Naive thymus-derived CD8-positive, alpha-beta T cell (primary cell): ENCODE measurements at regions of chr2 and their contacts with region 1.

Region 1: GRCh38 chr2:25314514-25315315 is 27.0 kb downstream of the DNMT3A start:
- DNase-seq: peak in 9 of 10 donors; percentile 39 to 78 (median 63)
- ATAC-seq: peak; percentile 83 to 88
- H3K4me3 Mint-ChIP-seq: peak overlapping the region; percentile 45 to 85 (median 79)
- H3K27ac Mint-ChIP-seq: peak overlapping the region; percentile 87 to 96 (median 93)
- H3K4me1 Mint-ChIP-seq: peaks cover 32 to 83% (median 72%) of the 10 kb centered on the region in 4 donors
- H3K27me3 Mint-ChIP-seq: no peaks in the 10 kb centered on the region

Region 2: DNA sequence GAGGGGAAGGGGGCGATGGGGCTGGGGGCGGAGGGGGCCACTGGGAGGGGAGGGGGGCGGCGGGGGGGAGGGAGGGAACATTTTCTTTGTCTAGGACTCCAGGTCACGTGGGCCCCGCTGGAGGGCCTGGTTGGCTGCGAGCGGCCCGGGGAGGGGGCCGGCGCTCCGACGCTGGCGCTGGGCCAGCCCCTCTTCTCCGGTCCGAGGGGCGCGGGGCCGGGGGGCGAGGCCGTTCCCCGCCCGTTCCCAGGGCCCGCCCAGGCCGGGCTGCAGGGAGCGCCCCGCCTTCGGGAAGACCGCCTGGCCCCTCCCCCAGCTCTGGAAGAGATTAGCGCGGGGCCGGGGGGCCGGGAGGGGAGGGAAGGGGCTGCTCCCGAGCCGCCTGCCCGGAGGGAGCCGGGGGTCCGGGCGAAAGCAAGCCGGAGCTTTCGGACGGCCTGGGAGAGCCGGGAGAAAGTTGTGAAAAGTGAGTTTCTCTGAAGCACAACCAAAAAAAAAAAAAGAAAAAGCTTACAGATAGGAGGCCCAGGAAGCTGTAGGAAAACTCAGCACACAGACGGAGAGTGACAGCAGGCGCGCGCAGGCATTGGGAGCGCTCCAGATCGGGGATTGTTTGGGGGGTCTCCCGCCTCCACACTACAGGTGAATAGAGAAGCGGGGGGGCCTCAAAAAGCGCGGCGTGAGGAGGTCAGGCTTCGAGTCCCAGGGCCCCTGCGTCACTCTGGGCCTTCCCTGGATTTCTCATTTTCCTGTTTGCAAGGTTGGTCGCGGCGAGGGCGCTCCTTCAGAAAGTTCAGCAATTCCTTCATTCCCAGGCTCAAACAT is 62.2 kb before region 1 on chr2:
- POLR2A ChIA-PET with region 1: interaction called, 24 read pairs
- DNase-seq: peak; percentile 35 to 72 (median 49)
- ATAC-seq: peak; percentile 46 to 56
- H3K4me3 Mint-ChIP-seq: peak overlapping the region; percentile 83 to 95 (median 91)
- H3K27ac Mint-ChIP-seq: peak overlapping the region; percentile 85 to 96 (median 91)
- H3K4me1 Mint-ChIP-seq: peaks cover 42 to 62% (median 53%) of the 10 kb centered on the region in 4 donors
- H3K27me3 Mint-ChIP-seq: no peaks in the 10 kb centered on the region

Region 3: DNA sequence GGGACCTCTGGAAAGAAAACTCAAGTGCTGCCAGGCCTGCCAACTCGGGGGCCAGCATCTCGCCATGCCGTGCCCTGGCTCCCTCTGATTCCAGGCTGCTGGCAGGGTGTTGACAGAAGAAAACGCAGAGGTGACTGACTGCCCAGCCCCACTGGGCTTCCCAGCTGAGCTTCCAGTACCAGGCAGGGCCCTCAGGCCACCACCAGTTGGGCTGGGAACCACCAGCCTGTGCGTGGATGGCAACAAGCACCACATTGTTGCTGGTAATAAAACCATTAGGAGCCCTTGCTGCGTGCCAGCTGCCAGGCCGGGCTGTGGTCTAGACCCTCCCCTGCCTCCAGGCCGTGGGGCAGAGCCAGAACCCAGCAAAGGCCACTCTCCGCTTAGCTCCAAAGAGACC is 17.9 kb after region 1 on chr2:
- POLR2A ChIA-PET with region 1: interaction called, 69 read pairs
- DNase-seq: no peak
- ATAC-seq: no peak
- H3K4me3 Mint-ChIP-seq: peak overlapping the region in 5 of 10 donors; percentile 13 to 80 (median 29)
- H3K27ac Mint-ChIP-seq: peak overlapping the region; percentile 13 to 94 (median 78)
- H3K4me1 Mint-ChIP-seq: peaks cover 56 to 90% (median 83%) of the 10 kb centered on the region in 4 donors
- H3K27me3 Mint-ChIP-seq: no peaks in the 10 kb centered on the region

Region 4: GRCh38 chr2:25494616-25495015 is 179.9 kb after region 1 on chr2:
- POLR2A ChIA-PET with region 1: no interaction called
- DNase-seq: no peak
- ATAC-seq: no peak
- H3K4me3 Mint-ChIP-seq: no peak overlapping the region
- H3K27ac Mint-ChIP-seq: no peak overlapping the region
- H3K4me1 Mint-ChIP-seq: peaks cover 0 to 6% (median 3%) of the 10 kb centered on the region in 4 donors
- H3K27me3 Mint-ChIP-seq: no peaks in the 10 kb centered on the region